ENCODE measurements at regions of chr6 and their contacts with region 1.

Region 1: GRCh38 chr6:105210932-105211531 is 31.2 kb upstream of the POPDC3 start:
- DNase-seq: no peak
- H3K4me3 ChIP-seq: no peak overlapping the region
- H3K27ac ChIP-seq: peak overlapping the region; percentile 96
- H3K4me1 ChIP-seq: peaks cover 40% of the 10 kb centered on the region
- H3K27me3 ChIP-seq: no peaks in the 10 kb centered on the region
- CTCF ChIP-seq: no peak

Region 2: GRCh38 chr6:104896914-104897313 is 314.1 kb before region 1 on chr6:
- CTCF ChIA-PET with region 1: no interaction called
- POLR2A ChIA-PET with region 1: no interaction called
- intact Hi-C with region 1: no loop called
- DNase-seq: no peak
- H3K4me3 ChIP-seq: no peak overlapping the region
- H3K27ac ChIP-seq: no peak overlapping the region
- H3K4me1 ChIP-seq: no peaks in the 10 kb centered on the region
- H3K27me3 ChIP-seq: no peaks in the 10 kb centered on the region
- CTCF ChIP-seq: peak; percentile 65

Region 3: DNA sequence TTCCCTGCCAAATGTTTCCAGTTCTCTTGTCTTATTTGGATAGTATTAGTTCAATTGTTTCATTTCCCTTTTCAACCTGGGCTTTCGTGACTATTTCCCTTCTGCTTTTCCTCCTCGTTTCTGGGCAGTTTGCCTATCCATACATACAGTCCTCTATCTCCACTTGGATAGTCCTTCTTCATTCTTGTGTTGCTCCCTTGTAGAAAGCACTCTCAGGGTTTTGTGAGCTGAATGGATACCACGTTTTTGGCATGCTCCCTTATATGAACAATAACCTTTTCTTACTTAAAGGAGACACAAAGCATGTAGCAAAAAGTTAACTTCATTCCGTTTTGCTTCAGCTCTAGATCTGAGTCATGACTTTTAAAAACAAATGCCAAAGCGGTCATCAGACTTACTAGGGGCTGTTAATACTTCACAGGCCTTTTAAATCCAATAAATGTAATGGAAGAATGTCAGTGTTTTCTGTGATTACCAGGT is 1166.1 kb after region 1 on chr6:
- CTCF ChIA-PET with region 1: interaction called, 10 read pairs
- POLR2A ChIA-PET with region 1: no interaction called
- intact Hi-C with region 1: no loop called
- DNase-seq: no peak
- H3K4me3 ChIP-seq: no peak overlapping the region
- H3K27ac ChIP-seq: no peak overlapping the region
- H3K4me1 ChIP-seq: peaks cover 46% of the 10 kb centered on the region
- H3K27me3 ChIP-seq: no peaks in the 10 kb centered on the region
- CTCF ChIP-seq: no peak